GM12878 (cell line): ENCODE measurements at regions of chr5 and their contacts with region 1.

Region 1: GRCh38 chr5:76175051-76175666 is 92.0 kb downstream of the SV2C start:
- DNase-seq: peak; percentile 32
- ATAC-seq: peak; percentile 82
- H3K4me3 ChIP-seq: peak overlapping the region; percentile 45; the same call in 1 of the 2 replicates
- H3K27ac ChIP-seq: peak overlapping the region; percentile 57
- H3K4me1 ChIP-seq: peaks cover 25% of the 10 kb centered on the region
- H3K27me3 ChIP-seq: no peaks in the 10 kb centered on the region
- CTCF ChIP-seq: peak; percentile 83 to 89 (median 84)
- EP300 ChIP-seq: no peak
- POLR2A ChIP-seq: no peak
- RAD21 ChIP-seq: peak; percentile 94

Region 2: DNA sequence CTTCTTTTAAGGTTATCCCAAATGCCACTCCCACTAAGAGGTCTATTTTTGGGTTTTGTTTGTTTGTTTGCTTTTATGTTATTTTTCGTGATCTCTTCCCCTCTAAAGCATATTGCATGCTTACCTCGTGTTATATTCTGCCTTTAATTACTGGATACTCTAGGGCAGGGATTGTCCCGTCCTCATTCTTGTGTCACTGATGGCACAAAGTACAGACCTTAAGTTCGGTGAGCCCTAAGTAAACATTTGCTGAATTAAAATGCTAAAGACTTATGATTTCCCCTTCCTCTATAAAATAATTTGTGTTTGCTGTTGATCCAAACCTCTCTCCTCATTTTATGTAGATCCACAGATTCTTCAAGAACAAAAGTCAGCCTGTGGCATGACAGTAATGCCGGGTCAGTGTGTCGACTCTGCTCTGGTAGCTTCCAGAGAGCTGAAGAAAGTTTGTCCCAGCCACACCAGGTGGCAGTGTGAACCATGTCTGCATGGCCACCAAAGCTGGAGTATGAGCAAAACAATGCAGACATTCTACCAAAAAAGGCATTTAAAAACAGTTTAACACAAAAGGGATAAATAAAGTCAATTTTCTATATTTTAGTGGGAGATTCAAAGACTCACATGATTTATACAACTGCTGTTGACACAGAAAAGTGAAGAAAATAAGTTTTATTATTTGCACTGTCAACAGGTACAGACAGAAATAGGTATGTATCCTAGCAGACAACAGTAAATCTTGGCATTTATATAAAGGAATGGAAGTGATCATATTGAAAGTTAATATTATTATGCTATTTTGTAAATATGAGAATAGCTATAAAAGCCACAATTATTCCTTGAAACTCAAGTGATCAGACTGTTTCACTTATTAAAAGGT is 440.0 kb before region 1 on chr5:
- CTCF ChIA-PET with region 1: interaction called, 43 read pairs
- POLR2A ChIA-PET with region 1: no interaction called
- RAD21 ChIA-PET with region 1: interaction called, 21 read pairs
- SMC1A ChIA-PET with region 1: interaction called, 30 read pairs
- in situ Hi-C with region 1: loop called (anchors 10 kb)
- intact Hi-C with region 1: loop called (anchors 1 kb)
- DNase-seq: peak; percentile 5
- ATAC-seq: peak; percentile 81
- H3K4me3 ChIP-seq: no peak overlapping the region
- H3K27ac ChIP-seq: no peak overlapping the region
- H3K4me1 ChIP-seq: no peaks in the 10 kb centered on the region
- H3K27me3 ChIP-seq: no peaks in the 10 kb centered on the region
- CTCF ChIP-seq: peak; percentile 61 to 70 (median 67); a peak in 5 of 6 replicates
- EP300 ChIP-seq: no peak
- POLR2A ChIP-seq: no peak
- RAD21 ChIP-seq: peak; percentile 93

Region 3: DNA sequence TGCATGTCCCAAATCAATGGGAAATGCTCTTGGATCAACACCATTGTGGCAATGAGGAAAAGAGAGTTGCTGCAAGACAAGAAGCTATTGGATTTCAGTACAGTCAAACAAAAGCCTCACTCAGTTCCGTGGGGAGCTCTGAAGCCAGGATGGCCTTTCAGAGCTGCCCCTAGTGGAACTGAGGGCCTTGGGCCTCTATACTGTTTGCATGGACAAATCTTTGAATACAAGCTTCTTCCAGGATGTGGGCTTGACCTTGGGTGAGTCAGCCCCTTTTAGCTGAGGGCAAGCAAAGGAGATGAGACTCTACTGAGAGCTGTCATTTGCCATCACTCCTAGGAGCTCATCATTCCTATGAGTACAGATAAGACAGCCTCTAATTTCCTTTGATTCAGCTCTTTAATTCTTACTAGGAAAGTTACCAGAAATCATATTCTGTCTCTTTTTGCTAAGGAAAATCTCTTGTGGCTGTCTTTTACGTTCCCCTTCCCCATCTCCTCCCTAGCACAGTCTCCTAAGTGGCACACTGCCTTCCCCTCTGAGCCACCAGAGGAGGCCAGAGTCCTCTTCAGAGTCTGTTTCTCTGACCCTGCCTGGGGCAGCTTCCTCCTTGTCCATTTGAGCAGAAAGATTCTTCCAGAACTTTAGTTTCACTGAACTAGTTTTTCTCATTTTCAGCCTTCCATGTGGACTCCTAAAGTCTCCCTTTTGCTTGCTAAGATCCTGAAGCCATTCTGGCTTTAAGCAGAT is 289.1 kb before region 1 on chr5:
- CTCF ChIA-PET with region 1: interaction called, 24 read pairs
- POLR2A ChIA-PET with region 1: no interaction called
- RAD21 ChIA-PET with region 1: interaction called, 22 read pairs
- SMC1A ChIA-PET with region 1: interaction called, 25 read pairs
- in situ Hi-C with region 1: no loop called
- intact Hi-C with region 1: loop called (anchors 2 kb)
- DNase-seq: no peak
- ATAC-seq: peak; percentile 73
- H3K4me3 ChIP-seq: no peak overlapping the region
- H3K27ac ChIP-seq: no peak overlapping the region
- H3K4me1 ChIP-seq: no peaks in the 10 kb centered on the region
- H3K27me3 ChIP-seq: no peaks in the 10 kb centered on the region
- CTCF ChIP-seq: peak; percentile 48 to 66 (median 62)
- EP300 ChIP-seq: no peak
- POLR2A ChIP-seq: no peak
- RAD21 ChIP-seq: peak; percentile 83

Region 4: DNA sequence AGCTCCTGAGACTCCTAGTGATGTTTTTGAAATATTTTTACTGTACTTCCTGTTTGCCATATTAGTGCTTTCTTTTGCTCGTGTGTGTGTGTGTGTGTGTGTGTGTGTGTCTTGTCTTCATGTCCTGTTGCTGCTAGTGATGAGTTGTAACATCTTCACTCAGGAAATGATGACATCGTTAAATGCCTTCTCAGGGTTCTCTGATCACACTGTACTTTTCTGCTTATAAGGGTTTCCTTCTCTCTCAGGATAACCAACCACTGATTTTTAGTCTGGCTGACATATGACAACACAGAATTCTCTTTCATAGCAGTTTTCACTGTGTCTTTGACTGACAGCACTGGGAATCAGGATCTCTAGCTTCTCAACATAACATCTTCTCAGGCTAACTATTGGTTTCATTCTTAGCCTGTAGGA is 75.9 kb before region 1 on chr5:
- CTCF ChIA-PET with region 1: interaction called, 6 read pairs
- POLR2A ChIA-PET with region 1: no interaction called
- RAD21 ChIA-PET with region 1: no interaction called
- SMC1A ChIA-PET with region 1: no interaction called
- in situ Hi-C with region 1: no loop called
- intact Hi-C with region 1: loop called (anchors 5 kb)
- DNase-seq: peak; percentile 43
- ATAC-seq: peak; percentile 93
- H3K4me3 ChIP-seq: 0 out of 2 replicates have a peak overlapping the region, but pooled peaks have one; percentile 7
- H3K27ac ChIP-seq: peak overlapping the region; percentile 51
- H3K4me1 ChIP-seq: peaks cover 6% of the 10 kb centered on the region; the same call in 1 of the 2 replicates
- H3K27me3 ChIP-seq: no peaks in the 10 kb centered on the region
- CTCF ChIP-seq: no peak
- EP300 ChIP-seq: no peak
- POLR2A ChIP-seq: no peak
- RAD21 ChIP-seq: no peak

Region 5: GRCh38 chr5:76155536-76155935 is 19.6 kb before region 1 on chr5:
- CTCF ChIA-PET with region 1: interaction called, 21 read pairs
- POLR2A ChIA-PET with region 1: no interaction called
- RAD21 ChIA-PET with region 1: no interaction called
- SMC1A ChIA-PET with region 1: interaction called, 4 read pairs
- in situ Hi-C with region 1: no loop called
- intact Hi-C with region 1: no loop called
- DNase-seq: no peak
- ATAC-seq: no peak
- H3K4me3 ChIP-seq: no peak overlapping the region
- H3K27ac ChIP-seq: no peak overlapping the region
- H3K4me1 ChIP-seq: no peaks in the 10 kb centered on the region
- H3K27me3 ChIP-seq: no peaks in the 10 kb centered on the region
- CTCF ChIP-seq: no peak
- EP300 ChIP-seq: no peak
- POLR2A ChIP-seq: no peak
- RAD21 ChIP-seq: no peak

Region 6: GRCh38 chr5:76310208-76310607 is 135.0 kb after region 1 on chr5:
- CTCF ChIA-PET with region 1: interaction called, 17 read pairs
- POLR2A ChIA-PET with region 1: no interaction called
- RAD21 ChIA-PET with region 1: interaction called, 4 read pairs
- SMC1A ChIA-PET with region 1: no interaction called
- in situ Hi-C with region 1: no loop called
- intact Hi-C with region 1: no loop called
- DNase-seq: no peak
- ATAC-seq: no peak
- H3K4me3 ChIP-seq: no peak overlapping the region
- H3K27ac ChIP-seq: no peak overlapping the region
- H3K4me1 ChIP-seq: no peaks in the 10 kb centered on the region
- H3K27me3 ChIP-seq: no peaks in the 10 kb centered on the region
- CTCF ChIP-seq: no peak
- EP300 ChIP-seq: no peak
- POLR2A ChIP-seq: no peak
- RAD21 ChIP-seq: no peak

Region 7: GRCh38 chr5:76472335-76473008 is 297.3 kb after region 1 on chr5:
- CTCF ChIA-PET with region 1: no interaction called
- POLR2A ChIA-PET with region 1: no interaction called
- RAD21 ChIA-PET with region 1: no interaction called
- SMC1A ChIA-PET with region 1: no interaction called
- in situ Hi-C with region 1: no loop called
- intact Hi-C with region 1: no loop called
- DNase-seq: no peak
- ATAC-seq: no peak
- H3K4me3 ChIP-seq: no peak overlapping the region
- H3K27ac ChIP-seq: no peak overlapping the region
- H3K4me1 ChIP-seq: no peaks in the 10 kb centered on the region
- H3K27me3 ChIP-seq: no peaks in the 10 kb centered on the region
- CTCF ChIP-seq: no peak
- EP300 ChIP-seq: no peak
- POLR2A ChIP-seq: no peak
- RAD21 ChIP-seq: no peak

Region 8: DNA sequence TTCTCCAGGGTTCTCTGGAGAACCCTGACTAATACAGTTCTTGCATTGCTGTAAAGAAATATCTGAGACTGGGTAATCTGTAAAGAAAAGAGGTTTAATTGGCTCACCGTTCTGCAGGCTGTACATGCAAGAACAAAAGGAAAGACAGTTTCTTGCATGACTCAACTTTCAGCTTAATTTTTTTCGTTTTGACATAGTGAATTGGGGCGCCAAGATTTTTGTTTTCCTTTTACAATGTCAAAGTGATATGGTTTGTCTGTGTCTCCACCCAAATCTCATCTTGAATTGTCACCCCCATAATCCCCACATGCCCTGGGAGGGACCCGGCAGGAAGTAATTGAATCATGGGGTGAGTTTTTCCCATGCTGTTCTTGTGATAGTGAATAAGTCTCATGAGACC is 765.8 kb after region 1 on chr5:
- CTCF ChIA-PET with region 1: no interaction called
- POLR2A ChIA-PET with region 1: no interaction called
- RAD21 ChIA-PET with region 1: no interaction called
- SMC1A ChIA-PET with region 1: no interaction called
- in situ Hi-C with region 1: no loop called
- intact Hi-C with region 1: no loop called
- DNase-seq: no peak
- ATAC-seq: no peak
- H3K4me3 ChIP-seq: no peak overlapping the region
- H3K27ac ChIP-seq: no peak overlapping the region
- H3K4me1 ChIP-seq: peaks cover 7% of the 10 kb centered on the region
- H3K27me3 ChIP-seq: no peaks in the 10 kb centered on the region
- CTCF ChIP-seq: no peak
- EP300 ChIP-seq: no peak
- POLR2A ChIP-seq: no peak
- RAD21 ChIP-seq: no peak